ENCODE measurements at regions of chr4 and their contacts with region 1.

Region 1: DNA sequence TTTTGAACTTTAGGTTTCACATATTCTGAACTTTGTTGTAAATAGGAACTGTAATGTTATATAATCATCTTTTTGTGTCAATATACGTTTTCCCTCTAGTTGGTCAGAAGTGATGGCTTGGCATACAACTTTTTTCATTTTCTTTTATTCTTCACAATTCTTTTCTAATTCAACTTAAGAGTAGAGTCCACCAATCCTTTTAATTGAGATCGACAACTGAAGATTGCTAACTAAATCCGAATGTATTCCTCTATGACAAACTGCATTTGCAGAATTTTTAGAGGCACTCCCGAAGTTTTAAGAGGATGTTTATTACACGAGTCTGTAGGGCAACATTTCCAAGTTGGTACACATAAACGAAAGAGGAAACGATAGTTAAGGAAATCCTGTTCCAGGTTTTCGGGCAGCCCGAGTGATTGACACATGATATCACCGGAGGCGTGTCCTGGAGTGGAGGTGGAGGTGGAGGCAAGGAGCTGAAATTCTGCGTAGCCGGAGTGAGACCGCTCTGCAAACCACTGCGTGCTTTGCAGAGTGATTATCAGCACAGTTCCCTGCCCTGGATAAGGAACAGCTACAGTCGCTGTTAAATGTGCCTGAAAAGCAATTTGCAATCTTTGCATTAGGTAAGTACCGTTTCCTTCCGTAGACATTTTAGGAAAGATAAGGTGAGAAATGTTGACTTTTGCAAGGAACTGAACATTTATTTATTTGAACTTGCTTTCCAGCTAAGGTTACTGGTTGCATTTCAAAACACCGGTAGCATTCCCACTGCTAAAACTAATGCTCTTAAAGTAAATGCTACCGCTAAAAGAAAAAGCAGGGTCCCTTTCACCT is at the start of gene SPRY1:
- DNase-seq: peak; percentile 88 to 96 (median 88)
- ATAC-seq: peak; percentile 74
- H3K4me3 ChIP-seq: peak within 1 kb of the TSS; percentile 64
- H3K4me1 ChIP-seq: no peaks in the 10 kb centered on the region
- CTCF ChIP-seq: no peak
- total RNA-seq, gene SPRY1: 26.5 to 46.4 (median 27.2) TPM

Region 2: GRCh38 chr4:123461996-123462395 is 65.5 kb after region 1 on chr4:
- intact Hi-C with region 1: no loop called
- DNase-seq: no peak
- ATAC-seq: peak; percentile 77
- H3K4me3 ChIP-seq: no peak overlapping the region
- H3K4me1 ChIP-seq: no peaks in the 10 kb centered on the region
- CTCF ChIP-seq: no peak

Region 3: GRCh38 chr4:123599920-123600810 is 203.6 kb after region 1 on chr4:
- intact Hi-C with region 1: loop called in 1 of 2 experiments (anchors 5 kb)
- DNase-seq: peak; percentile 82 to 92 (median 87)
- ATAC-seq: peak; percentile 83
- H3K4me3 ChIP-seq: no peak overlapping the region
- H3K4me1 ChIP-seq: peaks cover 45% of the 10 kb centered on the region
- CTCF ChIP-seq: no peak

Region 4: DNA sequence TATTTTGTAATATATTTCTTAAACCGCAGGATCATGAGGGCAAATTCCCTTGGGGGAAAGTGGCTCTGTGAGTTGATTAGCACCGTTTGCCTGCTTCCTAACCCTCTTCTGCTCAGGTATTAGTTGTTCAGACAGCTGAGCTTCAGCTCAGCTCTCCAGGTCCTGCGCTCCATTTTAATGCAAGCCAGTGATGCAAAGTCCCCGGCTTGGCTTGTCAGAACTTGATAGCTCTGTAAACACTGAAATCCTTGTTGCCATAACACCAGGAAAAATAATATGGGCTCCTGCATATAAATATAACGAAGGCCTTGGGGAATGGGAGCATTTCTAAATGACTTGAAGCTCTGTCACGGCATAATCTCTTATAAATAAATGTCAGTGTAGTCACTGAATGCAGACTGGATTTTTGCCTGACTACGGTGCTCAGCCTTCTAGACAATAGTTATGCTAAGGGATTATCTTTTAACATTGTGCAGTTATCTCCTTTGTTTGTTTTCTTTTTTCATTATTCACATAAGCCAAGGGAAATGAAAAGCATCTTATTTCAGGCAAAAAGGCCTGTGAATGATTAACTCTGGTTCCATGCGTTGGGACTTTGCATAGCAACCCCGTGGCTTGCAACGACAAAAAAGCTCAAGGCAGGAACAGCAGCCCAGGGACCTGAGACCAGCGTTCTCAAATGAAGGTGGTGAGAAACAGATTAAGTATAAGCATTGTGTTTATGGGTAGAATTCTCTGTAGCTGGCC is 253.3 kb after region 1 on chr4:
- intact Hi-C with region 1: loop called (anchors 5 to 10 kb)
- DNase-seq: peak in 2 of 3 donors; percentile 42 to 47
- ATAC-seq: peak; percentile 88
- H3K4me3 ChIP-seq: no peak overlapping the region
- H3K4me1 ChIP-seq: peaks cover 7% of the 10 kb centered on the region
- CTCF ChIP-seq: no peak